ENCODE measurements at regions of chr3 and their contacts with region 1.

Region 1: GRCh38 chr3:172595641-172596393 is 72.6 kb upstream of the TNFSF10 start:
- DNase-seq: peak; percentile 71
- CTCF ChIP-seq: peak; percentile 85

Region 2: DNA sequence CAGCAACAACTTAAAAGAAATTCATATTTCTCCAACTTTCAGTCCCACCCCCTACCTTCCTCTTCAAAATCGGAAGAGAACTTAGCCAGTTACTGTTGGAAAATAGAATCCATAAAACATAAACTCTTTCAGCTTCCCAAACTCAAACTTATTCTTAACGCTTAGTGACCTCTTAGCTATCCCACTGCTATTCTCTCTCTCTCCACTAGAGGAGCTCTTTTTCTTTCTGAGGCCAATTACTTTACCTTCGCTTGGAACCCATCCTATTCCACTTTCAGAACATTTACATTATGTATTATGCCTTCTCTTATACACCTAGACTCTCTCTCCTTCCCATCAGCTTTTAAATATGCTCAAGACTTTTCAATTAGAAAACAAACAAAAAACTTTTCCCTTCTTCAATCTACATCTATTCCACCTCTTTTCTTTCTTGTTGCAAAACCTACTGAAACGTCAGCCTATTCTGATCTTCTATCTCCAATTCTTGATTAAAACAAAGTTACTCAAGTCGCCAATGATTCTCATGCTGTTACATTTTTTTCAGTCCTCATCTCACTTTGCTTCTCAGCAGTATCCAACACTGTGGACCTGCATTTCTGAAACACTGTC is 134.2 kb before region 1 on chr3:
- CTCF ChIA-PET with region 1: interaction called, 22 read pairs
- POLR2A ChIA-PET with region 1: no interaction called
- DNase-seq: peak; percentile 67
- CTCF ChIP-seq: peak; percentile 70

Region 3: GRCh38 chr3:172506094-172506493 is 89.7 kb before region 1 on chr3:
- CTCF ChIA-PET with region 1: interaction called, 18 read pairs
- POLR2A ChIA-PET with region 1: no interaction called
- DNase-seq: no peak
- CTCF ChIP-seq: no peak

Region 4: DNA sequence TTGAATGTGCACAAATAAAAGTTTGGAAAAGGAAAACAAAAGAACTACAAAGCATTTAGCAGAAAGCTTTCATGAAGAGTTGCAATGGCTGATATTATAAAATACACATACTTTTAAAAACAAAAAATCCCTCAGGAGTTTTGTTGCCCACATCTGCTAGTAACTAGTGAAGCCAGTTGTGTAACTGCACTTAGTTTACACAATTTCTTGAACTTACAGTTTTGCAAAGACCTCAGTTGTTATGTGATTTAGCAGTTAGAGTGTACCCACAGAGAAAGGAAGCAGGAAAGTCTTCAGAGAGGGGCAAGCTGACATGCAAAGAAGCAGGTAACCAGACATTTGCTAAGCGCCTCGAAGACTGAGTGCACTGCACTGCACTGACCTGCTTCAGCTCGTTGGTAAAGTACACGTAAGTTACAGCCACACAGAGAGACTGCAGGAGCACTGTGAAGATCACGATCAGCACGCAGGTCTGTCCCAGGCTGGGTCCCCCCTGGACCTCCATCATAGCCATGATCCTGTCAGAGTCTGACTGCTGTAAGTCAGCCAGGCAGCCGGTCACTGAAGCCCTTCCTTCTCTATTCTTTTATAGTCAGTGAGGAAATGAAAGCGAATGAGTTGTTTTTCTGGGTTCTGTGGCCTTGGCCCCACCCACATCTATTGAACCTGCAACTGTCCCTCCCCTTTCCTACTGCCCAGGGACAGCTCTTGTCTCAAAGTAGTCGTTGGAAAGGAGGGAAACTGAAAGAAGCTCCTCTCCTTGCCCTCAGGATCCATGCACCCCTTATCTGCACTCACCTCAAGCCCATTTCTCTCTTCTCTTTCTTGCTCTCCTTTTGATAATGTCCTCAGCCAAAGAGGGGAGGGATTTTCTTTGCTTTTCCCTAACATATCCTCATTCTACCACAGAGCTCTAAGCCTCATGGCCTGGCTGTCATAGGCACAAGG is 72.7 kb before region 1 on chr3 and contains the start of gene TNFSF10:
- CTCF ChIA-PET with region 1: interaction called, 13 read pairs
- POLR2A ChIA-PET with region 1: no interaction called
- DNase-seq: peak; percentile 73
- CTCF ChIP-seq: no peak

Region 5: DNA sequence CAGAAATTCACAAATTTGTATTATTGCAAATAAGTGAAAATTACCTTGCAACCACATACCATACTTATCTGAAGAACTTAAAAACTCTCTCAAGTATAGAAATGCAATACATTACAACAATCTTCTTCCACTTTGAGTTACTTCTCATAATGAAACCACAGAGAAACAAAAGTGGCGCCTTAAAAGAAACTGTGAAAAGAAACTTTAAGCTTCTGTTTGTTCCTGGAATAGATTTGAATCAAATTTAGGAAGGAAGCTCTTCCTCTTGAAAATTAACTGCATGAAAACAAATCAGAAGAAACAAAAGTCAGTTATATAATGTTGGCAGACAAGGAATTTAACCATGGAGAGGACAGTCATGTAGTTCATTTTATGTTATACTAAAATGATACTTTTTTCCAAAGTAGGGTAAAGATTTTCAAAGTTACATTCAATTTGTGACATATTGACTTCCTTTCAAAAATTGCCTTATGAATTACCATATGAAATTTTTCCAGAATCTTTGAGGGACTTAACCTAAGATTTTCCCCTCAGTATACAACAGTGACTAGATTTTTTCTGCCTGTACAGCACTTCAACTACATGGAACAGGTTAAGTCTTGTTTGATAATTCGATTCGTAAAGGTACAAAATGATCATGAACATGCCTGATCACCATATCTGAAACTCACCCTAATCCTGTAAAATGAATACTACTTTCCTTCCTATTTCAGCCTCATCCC is 15.0 kb before region 1 on chr3:
- CTCF ChIA-PET with region 1: interaction called, 23 read pairs
- POLR2A ChIA-PET with region 1: no interaction called
- DNase-seq: peak; percentile 24
- CTCF ChIP-seq: no peak

Region 6: GRCh38 chr3:172614340-172615274 is 18.8 kb after region 1 on chr3:
- CTCF ChIA-PET with region 1: interaction called, 66 read pairs
- POLR2A ChIA-PET with region 1: no interaction called
- DNase-seq: no peak
- CTCF ChIP-seq: no peak

Region 7: DNA sequence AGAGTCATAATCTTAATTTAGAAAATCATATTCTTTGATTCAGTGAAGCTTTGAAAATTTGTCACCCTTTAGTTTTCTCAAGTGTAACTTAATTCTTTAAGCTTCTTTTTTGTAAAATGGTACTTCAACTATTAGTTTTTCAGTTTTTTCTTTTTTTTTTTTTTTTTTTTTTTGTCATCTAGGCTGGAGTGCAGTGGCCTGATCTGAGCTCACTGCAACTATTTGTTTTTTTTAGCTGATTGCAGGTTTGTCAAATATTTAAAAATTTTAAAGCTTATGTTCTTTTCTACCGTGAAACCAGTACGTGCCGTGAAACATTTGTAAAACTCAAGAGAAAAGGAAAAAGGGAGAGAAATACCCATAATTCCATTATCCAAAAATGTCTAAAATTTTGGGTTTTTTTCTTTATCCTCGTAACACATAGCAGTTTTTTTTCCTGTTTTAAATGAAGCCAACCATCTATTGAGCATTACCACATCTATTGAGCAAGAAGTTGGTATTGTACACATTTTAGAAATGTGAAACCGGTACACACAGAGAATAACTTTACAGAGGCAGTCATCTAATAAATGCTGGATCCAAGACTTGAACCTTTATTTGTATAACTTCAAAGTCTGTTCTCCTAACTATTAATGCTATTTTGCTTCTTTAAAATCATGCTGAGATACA is 180.4 kb after region 1 on chr3:
- CTCF ChIA-PET with region 1: no interaction called
- POLR2A ChIA-PET with region 1: no interaction called
- DNase-seq: no peak
- CTCF ChIP-seq: no peak

Measured in GM10248 (cell line).